MCF 10A (cell line): ENCODE measurements at regions of chr5 and their contacts with region 1.

Region 1: GRCh38 chr5:32092938-32093812 is 80.9 kb downstream of the GOLPH3 start:
- DNase-seq: peak; percentile 81
- H3K4me3 Mint-ChIP-seq: no peak overlapping the region
- H3K27ac Mint-ChIP-seq: peak overlapping the region; percentile 7
- H3K4me1 Mint-ChIP-seq: no peaks in the 10 kb centered on the region
- H3K27me3 Mint-ChIP-seq: no peaks in the 10 kb centered on the region
- CTCF ChIP-seq: peak; percentile 67

Region 2: GRCh38 chr5:31581498-31582099 is 511.6 kb before region 1 on chr5:
- CTCF ChIA-PET with region 1: interaction called, 8 read pairs
- POLR2A ChIA-PET with region 1: no interaction called
- intact Hi-C with region 1: loop called (anchors 1 kb)
- DNase-seq: peak; percentile 59
- H3K4me3 Mint-ChIP-seq: no peak overlapping the region
- H3K27ac Mint-ChIP-seq: no peak overlapping the region
- H3K4me1 Mint-ChIP-seq: peaks cover 5% of the 10 kb centered on the region
- H3K27me3 Mint-ChIP-seq: peaks cover 59% of the 10 kb centered on the region
- CTCF ChIP-seq: peak; percentile 37

Region 3: DNA sequence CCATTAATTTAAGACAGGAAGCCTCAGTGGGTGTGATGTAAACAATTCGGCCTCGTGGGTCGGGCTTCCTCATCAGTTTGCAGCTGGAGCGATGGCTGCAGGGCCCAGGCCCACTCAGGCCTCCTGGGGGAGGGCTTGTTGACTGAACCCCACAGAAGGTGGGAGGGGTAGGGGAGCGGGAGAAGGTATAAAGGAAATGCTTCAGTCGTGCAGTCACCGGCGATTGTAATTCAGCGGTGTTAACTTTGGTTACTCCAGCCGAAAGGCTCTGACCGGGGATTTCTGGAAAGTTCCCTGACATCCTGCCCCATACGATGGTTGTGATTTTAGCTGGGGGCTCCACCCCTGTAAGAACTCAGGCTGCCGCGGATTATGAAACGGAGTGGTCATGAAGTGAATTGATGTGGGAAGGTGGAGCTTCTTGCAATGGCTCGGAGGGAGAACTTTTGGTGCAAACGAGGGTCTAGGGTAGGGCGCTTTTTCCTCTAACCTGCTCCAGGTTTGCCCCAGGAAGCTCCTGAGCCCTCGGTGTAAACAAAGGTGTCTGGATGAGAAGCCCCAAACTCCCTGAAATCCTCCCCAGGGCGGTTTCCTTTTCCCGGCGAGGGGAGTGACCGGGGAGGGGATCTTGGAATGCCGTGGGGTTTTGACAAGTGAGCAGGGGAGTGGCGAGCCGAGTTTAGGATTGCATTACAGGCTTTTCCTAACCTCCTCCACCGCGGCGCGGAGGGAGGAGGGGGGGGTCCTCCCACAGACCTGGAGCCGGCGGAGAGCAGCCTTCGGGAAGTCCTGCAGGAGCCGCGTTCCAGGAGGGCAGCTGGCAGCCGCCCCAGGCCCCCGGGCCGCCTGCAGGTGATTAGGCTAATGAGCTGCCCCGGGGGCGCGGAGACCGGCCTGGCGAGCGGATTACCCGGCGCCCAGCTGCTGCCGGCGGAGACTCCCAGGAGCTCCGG is 238.7 kb before region 1 on chr5:
- CTCF ChIA-PET with region 1: interaction called, 14 read pairs
- POLR2A ChIA-PET with region 1: no interaction called
- intact Hi-C with region 1: no loop called
- DNase-seq: peak; percentile 69
- H3K4me3 Mint-ChIP-seq: peak overlapping the region; percentile 76
- H3K27ac Mint-ChIP-seq: peak overlapping the region; percentile 49
- H3K4me1 Mint-ChIP-seq: peaks cover 11% of the 10 kb centered on the region
- H3K27me3 Mint-ChIP-seq: no peaks in the 10 kb centered on the region
- CTCF ChIP-seq: no peak

Region 4: DNA sequence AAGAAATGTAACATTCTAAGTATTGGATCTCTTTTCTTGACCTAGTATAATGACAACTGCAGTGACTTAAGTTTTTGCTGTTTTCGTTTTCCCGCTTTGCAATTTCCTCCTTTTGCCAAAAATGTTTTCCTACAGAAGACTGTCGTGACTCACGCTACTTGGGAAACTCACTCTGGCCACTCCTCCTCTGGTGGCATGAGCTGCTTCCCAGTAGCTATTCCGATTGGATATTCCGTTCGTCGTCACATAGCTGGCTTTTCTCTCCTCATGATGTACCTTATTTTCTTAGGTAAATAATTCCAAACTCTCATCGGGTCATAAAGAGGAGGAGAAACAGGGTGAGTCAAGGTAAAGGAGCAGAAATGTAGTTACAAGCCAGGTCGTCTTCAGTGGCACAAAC is 16.1 kb after region 1 on chr5:
- CTCF ChIA-PET with region 1: interaction called, 15 read pairs
- POLR2A ChIA-PET with region 1: no interaction called
- intact Hi-C with region 1: no loop called
- DNase-seq: peak; percentile 51
- H3K4me3 Mint-ChIP-seq: no peak overlapping the region
- H3K27ac Mint-ChIP-seq: no peak overlapping the region
- H3K4me1 Mint-ChIP-seq: no peaks in the 10 kb centered on the region
- H3K27me3 Mint-ChIP-seq: no peaks in the 10 kb centered on the region
- CTCF ChIP-seq: no peak